ENCODE measurements at regions of chr12 and their contacts with region 1.

Region 1: GRCh38 chr12:50314629-50315312 is 31.5 kb upstream of the LIMA1 start:
- DNase-seq: peak in 1 of 2 donors; percentile 80
- H3K4me3 ChIP-seq: no peak overlapping the region
- H3K27ac ChIP-seq: no peak overlapping the region
- H3K4me1 ChIP-seq: peaks cover 0 to 23% (median 16%) of the 10 kb centered on the region in 4 donors
- H3K27me3 ChIP-seq: no peaks in the 10 kb centered on the region
- CTCF ChIP-seq: peak in 4 of 7 experiments; percentile 46 to 58 (median 54)
- EP300 ChIP-seq: no peak
- POLR2A ChIP-seq: no peak

Region 2: DNA sequence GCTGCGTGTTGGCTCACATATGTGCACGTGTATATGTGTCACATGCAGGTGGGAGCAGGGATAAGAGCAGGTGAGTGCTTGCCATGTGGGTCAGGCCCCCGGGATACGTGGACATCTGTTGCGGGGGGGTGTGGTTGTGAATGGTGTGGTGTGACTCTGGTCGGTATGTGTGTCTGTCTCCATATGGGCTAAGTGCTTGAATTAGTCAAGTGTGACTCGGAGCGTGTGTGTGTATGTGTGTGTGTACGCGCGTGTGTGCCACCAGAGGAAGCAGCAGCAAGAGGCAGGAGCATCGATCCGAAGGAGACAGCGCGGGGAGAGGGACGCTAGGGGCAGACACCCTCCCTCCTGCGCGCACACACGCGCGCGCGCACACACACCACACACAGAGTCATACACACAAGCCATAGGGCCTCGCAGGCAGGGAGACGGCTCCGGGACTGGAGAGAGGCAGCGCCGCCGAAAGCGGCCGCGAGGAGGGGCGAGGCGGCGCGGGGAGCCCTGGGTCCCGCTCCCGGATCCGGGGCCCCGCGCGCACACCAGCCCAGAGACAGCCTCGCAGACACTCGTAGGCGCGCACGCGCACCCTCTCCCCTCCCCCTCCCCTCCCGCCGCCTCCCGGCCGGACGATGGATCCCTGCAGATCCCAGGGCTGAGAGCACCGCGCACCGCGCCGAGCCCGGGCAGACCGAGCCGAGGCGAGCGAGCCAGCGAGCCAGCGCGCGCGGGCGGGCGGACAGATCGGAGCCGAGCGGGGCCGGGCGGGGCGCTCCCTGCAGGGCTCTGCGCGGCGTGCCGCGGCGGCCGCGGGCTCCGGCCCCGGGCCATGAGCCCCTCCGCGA is 257.6 kb before region 1 on chr12 and contains the start of gene ASIC1:
- intact Hi-C with region 1: no loop called
- DNase-seq: peak; percentile 65 to 90
- H3K4me3 ChIP-seq: peak within 1 kb of the TSS; percentile 61 to 76 (median 66)
- H3K27ac ChIP-seq: peak within 1 kb of the TSS; percentile 8 to 81 (median 49)
- H3K4me1 ChIP-seq: peaks cover 14 to 37% (median 34%) of the 10 kb centered on the region in 4 donors
- H3K27me3 ChIP-seq: peaks cover 0 to 26% (median 10%) of the 10 kb centered on the region in 3 donors
- CTCF ChIP-seq: no peak
- EP300 ChIP-seq: no peak
- POLR2A ChIP-seq: no peak
- total RNA-seq, gene ASIC1: 0.45 to 3.5 (median 1.3) TPM in 4 of 5 donors, not detected in the other

Region 3: GRCh38 chr12:50222275-50222795 is 92.4 kb before region 1 on chr12:
- intact Hi-C with region 1: loop called (anchors 10 kb)
- DNase-seq: peak; percentile 33 to 91
- H3K4me3 ChIP-seq: peak overlapping the region; percentile 40 to 45 (median 42)
- H3K27ac ChIP-seq: peak overlapping the region; percentile 76 to 86 (median 82)
- H3K4me1 ChIP-seq: peaks cover 25 to 65% (median 39%) of the 10 kb centered on the region in 4 donors
- H3K27me3 ChIP-seq: no peaks in the 10 kb centered on the region
- CTCF ChIP-seq: peak in 3 of 7 experiments; percentile 18 to 34 (median 21)
- EP300 ChIP-seq: no peak
- POLR2A ChIP-seq: no peak

Measured in stomach (tissue), 19 donors.